H1 (cell line): ENCODE measurements at regions of chr11 and their contacts with region 1.

Region 1: DNA sequence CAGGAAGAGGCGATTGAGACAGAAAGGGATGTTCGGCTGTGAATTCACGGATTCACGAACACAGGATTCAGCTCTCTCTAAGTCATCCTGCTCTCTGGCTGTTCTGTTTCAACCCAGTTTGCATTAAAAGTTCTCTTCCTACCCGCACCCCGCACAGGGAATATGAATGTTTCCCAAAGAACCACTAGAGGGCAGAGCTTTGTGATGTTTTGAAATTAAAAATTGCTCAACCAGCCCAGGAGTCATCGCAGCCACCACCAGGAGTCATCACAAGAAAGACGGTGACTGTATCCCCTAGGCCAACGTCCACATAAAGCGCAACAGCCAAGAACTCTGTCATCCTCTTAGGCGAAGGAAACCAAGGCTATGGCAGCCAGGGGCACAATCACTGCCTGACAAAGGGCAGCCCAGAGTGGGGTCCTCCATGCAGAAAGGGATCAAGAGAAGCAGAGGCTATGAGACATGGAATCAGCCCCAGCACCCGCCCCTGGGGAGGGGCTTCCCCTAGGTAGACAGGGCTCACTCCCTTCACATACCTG is 122.4 kb downstream of the WT1 start:
- DNase-seq: peak in 1 of 2 experiments; percentile 60
- H3K4me3 ChIP-seq: peak overlapping the region in 1 of 4 experiments; percentile 19; a peak in 3 of 8 replicates
- H3K27ac ChIP-seq: no peak overlapping the region
- H3K4me1 ChIP-seq: peaks cover 2 to 7% (median 5%) of the 10 kb centered on the region in 4 experiments; a peak in 6 of 7 replicates
- H3K27me3 ChIP-seq: no peaks in the 10 kb centered on the region
- CTCF ChIP-seq: peak in 2 of 3 experiments; percentile 69 to 91; a peak in 3 of 4 replicates
- EP300 ChIP-seq: no peak
- POLR2A ChIP-seq: no peak
- RAD21 ChIP-seq: peak; percentile 36 to 47; a peak in 3 of 4 replicates

Region 2: GRCh38 chr11:32187106-32187505 is 125.8 kb before region 1 on chr11:
- CTCF ChIA-PET with region 1: no interaction called
- POLR2A ChIA-PET with region 1: no interaction called
- DNase-seq: no peak
- H3K4me3 ChIP-seq: no peak overlapping the region
- H3K27ac ChIP-seq: no peak overlapping the region
- H3K4me1 ChIP-seq: no peaks in the 10 kb centered on the region
- H3K27me3 ChIP-seq: no peaks in the 10 kb centered on the region
- CTCF ChIP-seq: no peak
- EP300 ChIP-seq: no peak
- POLR2A ChIP-seq: no peak
- RAD21 ChIP-seq: no peak

Region 3: GRCh38 chr11:32297611-32298011 is 15.3 kb before region 1 on chr11:
- CTCF ChIA-PET with region 1: interaction called, 28 read pairs
- POLR2A ChIA-PET with region 1: no interaction called
- DNase-seq: no peak
- H3K4me3 ChIP-seq: no peak overlapping the region
- H3K27ac ChIP-seq: no peak overlapping the region
- H3K4me1 ChIP-seq: no peaks in the 10 kb centered on the region
- H3K27me3 ChIP-seq: no peaks in the 10 kb centered on the region
- CTCF ChIP-seq: peak in 2 of 3 experiments; percentile 4 to 7; a peak in 2 of 4 replicates
- EP300 ChIP-seq: no peak
- POLR2A ChIP-seq: no peak
- RAD21 ChIP-seq: peak; percentile 25 to 29; a peak in 3 of 4 replicates

Region 4: GRCh38 chr11:32302821-32303220 is 10.1 kb before region 1 on chr11:
- CTCF ChIA-PET with region 1: interaction called, 28 read pairs
- POLR2A ChIA-PET with region 1: no interaction called
- DNase-seq: no peak
- H3K4me3 ChIP-seq: no peak overlapping the region
- H3K27ac ChIP-seq: no peak overlapping the region
- H3K4me1 ChIP-seq: no peaks in the 10 kb centered on the region
- H3K27me3 ChIP-seq: no peaks in the 10 kb centered on the region
- CTCF ChIP-seq: no peak
- EP300 ChIP-seq: no peak
- POLR2A ChIP-seq: no peak
- RAD21 ChIP-seq: no peak

Region 5: DNA sequence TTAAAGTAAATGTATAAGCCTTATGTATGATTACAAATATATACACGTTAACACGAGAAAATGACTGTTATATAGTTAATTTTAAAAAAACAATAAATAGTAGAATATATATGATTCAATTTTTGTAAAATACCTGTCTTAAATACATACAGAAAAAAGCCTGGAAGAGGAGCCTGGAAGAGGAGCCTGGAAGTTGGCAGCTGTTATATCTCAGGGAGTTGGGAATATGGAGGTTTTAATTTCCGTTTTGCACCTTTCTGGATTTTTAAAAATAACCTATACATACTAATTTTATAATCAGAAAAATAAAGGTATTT is 10.8 kb after region 1 on chr11:
- CTCF ChIA-PET with region 1: interaction called, 19 read pairs
- POLR2A ChIA-PET with region 1: no interaction called
- DNase-seq: no peak
- H3K4me3 ChIP-seq: no peak overlapping the region
- H3K27ac ChIP-seq: no peak overlapping the region
- H3K4me1 ChIP-seq: no peaks in the 10 kb centered on the region
- H3K27me3 ChIP-seq: no peaks in the 10 kb centered on the region
- CTCF ChIP-seq: no peak
- EP300 ChIP-seq: no peak
- POLR2A ChIP-seq: no peak
- RAD21 ChIP-seq: no peak

Region 6: GRCh38 chr11:32333320-32333991 is 20.5 kb after region 1 on chr11:
- CTCF ChIA-PET with region 1: interaction called, 125 read pairs
- POLR2A ChIA-PET with region 1: interaction called, 5 read pairs
- DNase-seq: peak; percentile 38 to 84
- H3K4me3 ChIP-seq: peak overlapping the region; percentile 40 to 65 (median 54)
- H3K27ac ChIP-seq: no peak overlapping the region
- H3K4me1 ChIP-seq: peaks cover 2 to 7% (median 5%) of the 10 kb centered on the region in 4 experiments; a peak in 3 of 7 replicates
- H3K27me3 ChIP-seq: peaks cover 0 to 28% (median 19%) of the 10 kb centered on the region in 4 experiments; a peak in 6 of 7 replicates
- CTCF ChIP-seq: peak; percentile 25 to 45 (median 40)
- EP300 ChIP-seq: no peak
- POLR2A ChIP-seq: 0 out of 3 replicates have a peak, but pooled peaks of 1 of the 2 experiments have one; percentile 25
- RAD21 ChIP-seq: peak in 1 of 2 experiments; percentile 31; a peak in 1 of 4 replicates